GM10248 (cell line): ENCODE measurements at regions of chr17 and their contacts with region 1.

Region 1: GRCh38 chr17:51764387-51764972 is 394.0 kb downstream of the CA10 start:
- DNase-seq: peak; percentile 56
- CTCF ChIP-seq: peak; percentile 79

Region 2: DNA sequence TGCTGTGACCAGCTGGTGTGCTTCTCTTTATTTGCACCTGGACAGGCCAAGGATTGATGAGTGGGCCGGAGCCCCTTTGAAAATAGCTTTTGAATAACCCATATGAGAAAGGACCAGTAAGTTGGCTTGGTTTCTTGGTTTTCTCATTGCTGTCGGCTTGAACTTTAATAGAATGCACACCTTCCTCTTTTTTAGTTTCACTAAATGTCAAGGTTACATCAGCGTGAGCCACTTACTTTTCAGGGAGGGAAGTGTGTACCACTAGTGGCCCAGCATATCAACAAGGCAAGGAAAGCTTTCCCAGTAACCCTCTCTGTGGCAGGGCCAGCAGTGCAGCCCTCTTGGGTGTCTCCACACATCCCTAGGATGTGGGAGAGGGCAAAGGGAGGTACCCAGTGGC is 39.3 kb before region 1 on chr17:
- CTCF ChIA-PET with region 1: no interaction called
- POLR2A ChIA-PET with region 1: no interaction called
- DNase-seq: peak; percentile 26
- CTCF ChIP-seq: no peak

Region 3: GRCh38 chr17:51748749-51749539 is 15.5 kb before region 1 on chr17:
- CTCF ChIA-PET with region 1: interaction called, 20 read pairs
- POLR2A ChIA-PET with region 1: no interaction called
- DNase-seq: no peak
- CTCF ChIP-seq: no peak

Region 4: DNA sequence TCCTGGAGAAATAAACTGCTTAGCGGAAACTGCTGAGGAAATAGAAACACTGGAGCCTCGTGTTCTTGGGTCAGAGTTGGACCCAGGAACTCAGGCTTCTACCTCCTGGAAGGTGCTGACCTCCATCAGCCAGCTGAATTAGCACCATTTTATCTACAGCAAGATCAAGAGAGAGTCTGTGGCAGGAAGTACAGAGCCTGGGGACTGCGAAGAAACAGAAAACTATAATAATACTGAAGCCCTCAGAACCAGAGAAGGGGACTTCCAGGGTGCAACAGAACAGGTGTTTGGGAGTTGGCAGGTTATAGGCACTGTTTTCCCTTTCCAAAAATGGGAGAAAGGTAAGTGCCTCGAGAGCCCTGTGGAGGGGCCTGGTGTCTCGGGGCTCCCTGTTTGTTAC is 14.4 kb after region 1 on chr17:
- CTCF ChIA-PET with region 1: interaction called, 39 read pairs
- POLR2A ChIA-PET with region 1: no interaction called
- DNase-seq: no peak
- CTCF ChIP-seq: no peak

Region 5: GRCh38 chr17:51793686-51794085 is 29.2 kb after region 1 on chr17:
- CTCF ChIA-PET with region 1: no interaction called
- POLR2A ChIA-PET with region 1: no interaction called
- DNase-seq: no peak
- CTCF ChIP-seq: no peak